ENCODE measurements at regions of chr19 and their contacts with region 1.

Region 1: DNA sequence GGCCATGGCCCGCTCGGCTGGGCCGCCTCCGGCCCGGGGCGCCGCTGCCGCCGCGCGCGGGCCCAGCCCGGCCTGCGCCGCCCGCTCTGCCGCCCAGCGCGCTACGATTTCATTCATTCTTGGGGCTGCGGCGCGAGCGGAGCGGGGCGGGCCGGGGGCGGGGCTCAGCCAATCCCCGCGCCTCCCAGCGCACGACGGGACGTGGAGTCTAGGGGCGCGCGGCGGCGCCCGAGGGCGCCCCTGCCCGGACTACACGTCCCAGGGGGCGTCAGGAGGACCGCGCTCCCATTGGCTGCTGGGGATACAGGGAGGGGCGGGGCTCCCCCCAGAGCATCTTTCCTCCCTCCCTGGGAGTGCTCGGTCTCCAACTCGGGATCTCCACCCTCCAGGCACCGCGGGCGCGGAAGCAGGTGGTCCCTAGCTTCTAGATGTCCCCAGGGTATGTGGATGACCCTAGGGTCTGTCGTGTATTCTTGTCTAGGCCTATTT is 5.6 kb upstream of the DPF1 start:
- DNase-seq: peak; percentile 67
- H3K4me3 Mint-ChIP-seq: no peak overlapping the region
- H3K27ac Mint-ChIP-seq: no peak overlapping the region
- H3K4me1 Mint-ChIP-seq: peaks cover 7% of the 10 kb centered on the region
- H3K27me3 Mint-ChIP-seq: peaks cover 47% of the 10 kb centered on the region

Region 2: DNA sequence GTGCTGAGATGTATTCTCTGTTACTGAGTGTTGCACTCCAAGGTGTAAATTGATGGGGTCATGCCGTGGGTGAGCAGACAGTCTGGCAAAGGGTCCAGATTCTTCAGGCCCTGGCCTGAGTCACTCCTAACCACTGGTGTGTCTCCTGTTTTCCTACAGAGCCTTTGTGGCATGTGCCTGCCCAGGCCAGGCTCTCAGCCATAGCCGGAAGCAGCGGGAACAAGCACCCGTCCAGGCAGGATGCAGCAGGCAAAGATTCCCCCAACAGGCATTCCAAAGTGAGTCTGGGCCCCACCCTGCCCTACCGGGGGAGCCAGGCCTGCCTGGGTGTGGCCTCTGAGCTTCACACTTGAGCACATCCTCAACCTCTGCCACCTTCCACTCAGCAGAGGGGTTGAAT is 67.5 kb before region 1 on chr19:
- CTCF ChIA-PET with region 1: no interaction called
- POLR2A ChIA-PET with region 1: no interaction called
- DNase-seq: no peak
- H3K4me3 Mint-ChIP-seq: no peak overlapping the region
- H3K27ac Mint-ChIP-seq: no peak overlapping the region
- H3K4me1 Mint-ChIP-seq: no peaks in the 10 kb centered on the region
- H3K27me3 Mint-ChIP-seq: no peaks in the 10 kb centered on the region

Region 3: GRCh38 chr19:38173291-38174041 is 56.2 kb before region 1 on chr19:
- CTCF ChIA-PET with region 1: no interaction called
- POLR2A ChIA-PET with region 1: no interaction called
- DNase-seq: no peak
- H3K4me3 Mint-ChIP-seq: no peak overlapping the region
- H3K27ac Mint-ChIP-seq: no peak overlapping the region
- H3K4me1 Mint-ChIP-seq: no peaks in the 10 kb centered on the region
- H3K27me3 Mint-ChIP-seq: no peaks in the 10 kb centered on the region

Region 4: DNA sequence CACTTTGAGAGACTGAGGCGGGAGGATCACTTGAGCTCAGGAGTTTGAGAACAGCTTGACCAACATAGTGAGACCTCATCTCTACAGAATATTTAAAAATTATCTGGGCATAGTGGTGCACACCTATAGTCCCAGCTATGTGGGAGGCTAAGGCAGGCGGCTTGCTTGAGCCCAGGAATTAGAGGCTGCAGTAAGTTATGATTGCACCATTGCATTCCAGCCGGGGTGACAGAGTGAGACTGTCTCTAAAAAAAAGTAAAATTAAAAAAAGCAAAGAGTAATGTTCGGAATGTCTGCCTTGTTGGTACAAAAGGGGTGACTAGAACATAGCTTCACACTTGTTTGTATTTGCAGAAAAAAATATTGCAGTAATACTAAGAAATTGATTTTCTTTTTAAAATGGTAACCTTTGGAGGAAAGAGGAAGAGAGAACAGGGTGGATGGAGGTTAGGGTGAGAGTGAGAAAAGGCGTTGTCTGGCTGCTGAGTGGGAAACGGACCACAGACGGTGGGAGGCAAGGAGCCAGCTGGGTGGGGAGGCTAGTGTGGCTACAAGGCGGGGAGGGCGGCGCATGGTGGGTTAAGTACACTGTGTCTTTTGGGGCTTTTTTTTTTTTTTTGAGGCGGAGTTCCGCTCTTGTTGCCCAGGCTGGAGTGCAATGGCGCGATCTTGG is 16.3 kb after region 1 on chr19:
- CTCF ChIA-PET with region 1: interaction called, 32 read pairs
- POLR2A ChIA-PET with region 1: no interaction called
- DNase-seq: no peak
- H3K4me3 Mint-ChIP-seq: no peak overlapping the region
- H3K27ac Mint-ChIP-seq: no peak overlapping the region
- H3K4me1 Mint-ChIP-seq: peaks cover 5% of the 10 kb centered on the region
- H3K27me3 Mint-ChIP-seq: no peaks in the 10 kb centered on the region

Measured in activated CD4-positive, alpha-beta memory T cell treated with anti-CD3 and anti-CD28 coated beads, Interleukin-2, amount 10 ng/mL, durations not matched to agents 7 days and 5 days (primary cell).